ENCODE measurements at regions of chr4 and their contacts with region 1.

Region 1: GRCh38 chr4:68732653-68733466 is 62.4 kb upstream of the UGT2B15 start:
- DNase-seq: peak; percentile 90 to 94
- H3K4me3 ChIP-seq: no peak overlapping the region
- H3K4me3 Mint-ChIP-seq: peak overlapping the region; percentile 63
- H3K27ac Mint-ChIP-seq: peak overlapping the region; percentile 90
- H3K4me1 ChIP-seq: peaks cover 46% of the 10 kb centered on the region
- H3K4me1 Mint-ChIP-seq: peaks cover 40% of the 10 kb centered on the region
- H3K27me3 ChIP-seq: no peaks in the 10 kb centered on the region
- H3K27me3 Mint-ChIP-seq: no peaks in the 10 kb centered on the region
- CTCF ChIP-seq: no peak

Region 2: GRCh38 chr4:68283714-68284113 is 449.1 kb before region 1 on chr4:
- CTCF ChIA-PET with region 1: no interaction called
- POLR2A ChIA-PET with region 1: no interaction called
- intact Hi-C with region 1: loop called (anchors 1 kb)
- DNase-seq: no peak
- H3K4me3 ChIP-seq: no peak overlapping the region
- H3K4me3 Mint-ChIP-seq: no peak overlapping the region
- H3K27ac Mint-ChIP-seq: peak overlapping the region; percentile 82
- H3K4me1 ChIP-seq: peaks cover 41% of the 10 kb centered on the region
- H3K4me1 Mint-ChIP-seq: peaks cover 19% of the 10 kb centered on the region
- H3K27me3 ChIP-seq: no peaks in the 10 kb centered on the region
- H3K27me3 Mint-ChIP-seq: no peaks in the 10 kb centered on the region
- CTCF ChIP-seq: no peak

Region 3: DNA sequence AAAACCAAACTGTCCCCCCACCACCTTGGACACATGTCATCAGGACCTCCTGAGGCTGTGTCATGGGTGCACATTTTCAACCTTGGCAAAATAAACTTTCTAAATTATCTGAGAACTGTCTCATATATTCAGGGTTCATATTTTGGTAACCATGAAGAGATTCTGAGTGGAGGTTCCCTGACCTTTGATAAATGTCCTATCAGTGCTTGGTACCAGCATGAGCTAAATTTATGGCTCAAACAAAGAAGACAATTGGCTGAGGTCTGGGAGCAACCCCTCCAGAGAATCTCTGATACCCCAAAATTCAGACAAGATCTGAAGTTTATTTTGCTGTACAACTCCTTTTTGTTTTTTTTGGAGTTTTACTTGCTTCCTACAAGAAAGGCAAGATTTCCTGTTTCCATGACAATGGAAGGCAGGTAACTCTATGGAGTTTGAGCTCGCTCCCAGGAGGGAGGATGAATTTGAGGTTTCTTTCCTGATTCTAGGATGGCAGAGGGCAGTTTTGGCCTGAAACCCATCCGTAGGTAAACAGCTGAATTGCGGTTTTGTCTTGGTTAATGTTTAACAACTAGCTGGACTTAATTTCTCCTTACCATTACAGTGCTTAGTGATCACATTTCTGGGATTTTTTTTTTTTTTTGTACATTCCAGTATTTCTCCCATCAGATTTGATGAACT is 77.0 kb before region 1 on chr4:
- CTCF ChIA-PET with region 1: no interaction called
- POLR2A ChIA-PET with region 1: no interaction called
- intact Hi-C with region 1: loop called (anchors 1 kb)
- DNase-seq: peak; percentile 45 to 48
- H3K4me3 ChIP-seq: no peak overlapping the region
- H3K4me3 Mint-ChIP-seq: peak overlapping the region; percentile 54
- H3K27ac Mint-ChIP-seq: peak overlapping the region; percentile 39
- H3K4me1 ChIP-seq: peaks cover 28% of the 10 kb centered on the region
- H3K4me1 Mint-ChIP-seq: peaks cover 17% of the 10 kb centered on the region
- H3K27me3 ChIP-seq: no peaks in the 10 kb centered on the region
- H3K27me3 Mint-ChIP-seq: no peaks in the 10 kb centered on the region
- CTCF ChIP-seq: no peak

Region 4: DNA sequence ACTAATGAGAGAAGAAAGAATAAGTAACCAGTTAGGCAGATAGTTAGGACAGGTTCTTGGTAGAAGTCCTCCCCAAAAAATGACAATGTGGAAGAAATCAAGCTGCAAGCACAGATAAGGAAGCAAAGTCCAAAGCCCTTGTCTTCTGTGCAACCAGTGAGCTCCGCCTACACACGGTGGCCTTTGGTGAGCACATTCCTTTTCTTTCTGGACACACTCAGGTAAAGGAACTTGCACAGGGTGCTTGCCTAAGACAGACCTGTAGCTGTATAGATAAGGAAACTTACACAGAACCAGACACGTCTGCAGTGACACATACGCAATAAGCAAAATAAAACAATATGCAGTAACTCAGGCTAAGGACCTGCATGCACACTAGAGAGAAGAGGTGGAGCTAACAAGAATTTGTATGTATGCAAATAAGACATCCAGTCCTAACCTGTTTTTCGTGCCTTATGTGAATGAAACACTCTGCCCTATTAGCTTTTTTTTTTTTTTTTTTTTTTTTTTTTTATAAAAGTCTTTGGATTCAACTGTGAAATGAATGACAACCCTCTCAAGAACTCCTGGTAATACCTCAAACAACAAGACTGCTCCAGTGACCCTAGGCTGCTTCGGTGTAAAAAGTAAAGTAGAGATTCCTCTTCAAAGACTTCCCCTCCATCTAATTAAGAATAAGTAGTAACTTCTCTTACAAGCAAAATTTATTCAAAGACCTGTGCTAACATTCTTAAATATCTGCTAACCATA is 131.8 kb after region 1 on chr4:
- CTCF ChIA-PET with region 1: interaction called, 7 read pairs
- POLR2A ChIA-PET with region 1: interaction called, 19 read pairs
- intact Hi-C with region 1: loop called (anchors 1 kb)
- DNase-seq: peak; percentile 89 to 96
- H3K4me3 ChIP-seq: no peak overlapping the region
- H3K4me3 Mint-ChIP-seq: peak overlapping the region; percentile 54
- H3K27ac Mint-ChIP-seq: peak overlapping the region; percentile 82
- H3K4me1 ChIP-seq: peaks cover 34% of the 10 kb centered on the region
- H3K4me1 Mint-ChIP-seq: peaks cover 32% of the 10 kb centered on the region
- H3K27me3 ChIP-seq: no peaks in the 10 kb centered on the region
- H3K27me3 Mint-ChIP-seq: no peaks in the 10 kb centered on the region
- CTCF ChIP-seq: no peak

Region 5: GRCh38 chr4:68963374-68963773 is 230.5 kb after region 1 on chr4:
- CTCF ChIA-PET with region 1: no interaction called
- POLR2A ChIA-PET with region 1: no interaction called
- intact Hi-C with region 1: loop called (anchors 1 kb)
- DNase-seq: peak; percentile 29 to 42
- H3K4me3 ChIP-seq: no peak overlapping the region
- H3K4me3 Mint-ChIP-seq: peak overlapping the region; percentile 38
- H3K27ac Mint-ChIP-seq: peak overlapping the region; percentile 34
- H3K4me1 ChIP-seq: peaks cover 49% of the 10 kb centered on the region
- H3K4me1 Mint-ChIP-seq: peaks cover 34% of the 10 kb centered on the region
- H3K27me3 ChIP-seq: no peaks in the 10 kb centered on the region
- H3K27me3 Mint-ChIP-seq: no peaks in the 10 kb centered on the region
- CTCF ChIP-seq: no peak

Region 6: GRCh38 chr4:69167300-69167699 is 434.4 kb after region 1 on chr4:
- CTCF ChIA-PET with region 1: no interaction called
- POLR2A ChIA-PET with region 1: no interaction called
- intact Hi-C with region 1: loop called (anchors 1 kb)
- DNase-seq: no peak
- H3K4me3 ChIP-seq: no peak overlapping the region
- H3K4me3 Mint-ChIP-seq: no peak overlapping the region
- H3K27ac Mint-ChIP-seq: no peak overlapping the region
- H3K4me1 ChIP-seq: 0 out of 2 replicates have a peak, but pooled peaks cover 4% of the 10 kb centered on the region
- H3K4me1 Mint-ChIP-seq: peaks cover 6% of the 10 kb centered on the region
- H3K27me3 ChIP-seq: no peaks in the 10 kb centered on the region
- H3K27me3 Mint-ChIP-seq: no peaks in the 10 kb centered on the region
- CTCF ChIP-seq: no peak